Common myeloid progenitor, CD34-positive (primary cell): ENCODE measurements at regions of chr6 and their contacts with region 1.

Region 1: GRCh38 chr6:31952140-31952805 is 6.4 kb downstream of the CFB start:
- DNase-seq: peak in 2 of 3 donors; percentile 39 to 47
- H3K4me3 ChIP-seq: no peak overlapping the region
- H3K27ac ChIP-seq: no peak overlapping the region
- H3K4me1 ChIP-seq: no peaks in the 10 kb centered on the region
- H3K27me3 ChIP-seq: no peaks in the 10 kb centered on the region

Region 2: GRCh38 chr6:31940256-31940664 is 12.0 kb before region 1 on chr6:
- CTCF ChIA-PET with region 1: interaction called, 23 read pairs
- POLR2A ChIA-PET with region 1: no interaction called
- DNase-seq: no peak
- H3K4me3 ChIP-seq: no peak overlapping the region
- H3K27ac ChIP-seq: no peak overlapping the region
- H3K4me1 ChIP-seq: no peaks in the 10 kb centered on the region
- H3K27me3 ChIP-seq: peaks cover 0 to 9% (median 0%) of the 10 kb centered on the region in 5 experiments

Region 3: DNA sequence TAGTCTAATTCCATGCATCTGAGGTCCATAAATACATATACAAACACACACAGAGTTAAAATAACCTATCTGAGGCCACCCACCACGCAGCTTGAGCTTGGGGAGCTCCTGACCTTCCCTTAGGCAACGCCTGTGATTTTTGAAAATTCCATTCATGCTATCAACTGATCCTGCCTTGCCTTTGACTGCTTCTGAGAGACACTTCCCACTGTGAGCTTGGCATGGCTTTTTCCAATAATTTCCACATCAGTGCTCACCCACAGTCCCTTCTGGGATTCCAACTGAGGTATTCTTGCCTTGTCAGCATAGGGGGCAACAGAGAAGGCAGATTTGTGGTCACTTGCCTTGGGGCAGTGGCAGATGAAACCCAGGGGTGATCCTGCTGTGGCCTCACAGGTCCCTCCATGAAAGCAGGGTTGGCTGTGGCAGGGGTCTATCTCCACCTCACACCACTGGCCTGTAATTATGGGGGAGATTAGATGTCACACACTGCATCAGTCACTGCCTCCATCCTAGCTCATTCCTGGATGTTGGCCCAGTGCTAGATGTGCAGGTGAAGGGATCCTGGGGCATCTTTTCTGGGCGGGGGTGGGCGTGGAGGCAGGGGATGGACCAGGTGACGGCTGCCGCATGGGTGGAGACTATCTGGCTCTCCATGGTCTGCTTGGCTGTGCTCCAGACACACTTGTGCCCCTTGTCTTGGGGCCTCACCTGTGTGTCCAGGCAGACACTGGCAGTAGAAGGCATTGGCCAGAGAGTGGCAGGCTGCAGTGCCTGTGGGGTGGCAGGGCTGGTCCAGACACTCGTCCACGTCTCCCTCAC is 251.4 kb after region 1 on chr6:
- CTCF ChIA-PET with region 1: no interaction called
- POLR2A ChIA-PET with region 1: no interaction called
- DNase-seq: no peak
- H3K4me3 ChIP-seq: no peak overlapping the region
- H3K27ac ChIP-seq: no peak overlapping the region
- H3K4me1 ChIP-seq: no peaks in the 10 kb centered on the region
- H3K27me3 ChIP-seq: no peaks in the 10 kb centered on the region